ENCODE measurements at regions of chr5 and their contacts with region 1.

Region 1: DNA sequence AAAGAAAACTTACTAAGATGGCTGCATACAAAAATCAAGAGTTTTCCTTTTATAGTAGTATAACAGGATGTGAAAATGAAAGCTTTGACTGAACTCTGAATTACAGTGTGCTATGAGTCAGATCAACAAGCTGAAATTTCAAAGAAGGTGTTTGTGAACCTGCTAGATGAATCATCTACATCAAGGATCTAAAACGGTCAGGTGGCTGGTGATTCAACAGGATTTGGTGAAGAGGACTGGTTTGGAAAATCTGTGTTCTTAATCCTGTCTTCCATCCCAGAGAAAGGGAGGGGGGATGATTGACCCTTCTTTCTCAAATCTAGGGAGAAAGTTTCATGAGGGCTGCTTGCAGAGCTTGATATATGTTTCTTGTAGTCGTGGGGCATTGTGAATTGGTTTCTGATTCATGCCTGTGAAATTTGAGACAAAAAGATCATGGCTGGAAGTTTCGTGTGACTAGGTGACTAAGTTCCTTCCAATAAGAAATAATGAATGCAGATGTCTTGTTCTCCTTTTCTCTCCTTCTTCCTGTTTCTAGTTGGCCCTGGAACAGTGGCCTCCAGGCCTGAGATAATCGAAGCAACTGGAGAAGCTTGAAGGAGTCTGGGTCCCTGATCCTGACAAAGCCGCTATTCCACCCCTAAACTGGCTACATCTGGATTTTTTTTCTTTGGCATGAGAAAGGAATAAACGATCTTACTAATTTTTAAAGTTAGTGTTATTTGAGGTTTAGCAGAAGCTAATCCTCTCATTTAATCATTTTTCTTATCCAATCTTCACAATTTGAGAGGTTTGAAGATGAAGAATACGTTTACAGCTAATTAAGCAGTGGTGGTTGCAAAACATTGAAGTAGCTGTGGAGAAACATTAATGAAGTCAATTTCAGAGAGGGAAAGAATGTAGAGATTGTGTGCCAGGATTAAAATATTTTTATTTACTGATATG is 67.2 kb downstream of the MRPS30 start:
- DNase-seq: peak; percentile 49
- ATAC-seq: peak; percentile 99
- H3K4me3 Mint-ChIP-seq: no peak overlapping the region
- H3K27ac Mint-ChIP-seq: peak overlapping the region; percentile 89
- H3K4me1 Mint-ChIP-seq: peaks cover 23% of the 10 kb centered on the region
- H3K27me3 Mint-ChIP-seq: no peaks in the 10 kb centered on the region

Region 2: GRCh38 chr5:44808435-44809214 is 67.3 kb before region 1 on chr5 and contains the start of gene MRPS30:
- CTCF ChIA-PET with region 1: no interaction called
- POLR2A ChIA-PET with region 1: no interaction called
- intact Hi-C with region 1: loop called (anchors 1 kb)
- DNase-seq: peak; percentile 93
- ATAC-seq: peak; percentile 96
- H3K4me3 Mint-ChIP-seq: peak within 1 kb of the TSS; percentile 91
- H3K27ac Mint-ChIP-seq: peak within 1 kb of the TSS; percentile 98
- H3K4me1 Mint-ChIP-seq: peaks cover 27% of the 10 kb centered on the region
- H3K27me3 Mint-ChIP-seq: no peaks in the 10 kb centered on the region
- total RNA-seq, gene MRPS30: 59.7 to 73.3 TPM